ENCODE measurements at regions of chr17 and their contacts with region 1.

Region 1: DNA sequence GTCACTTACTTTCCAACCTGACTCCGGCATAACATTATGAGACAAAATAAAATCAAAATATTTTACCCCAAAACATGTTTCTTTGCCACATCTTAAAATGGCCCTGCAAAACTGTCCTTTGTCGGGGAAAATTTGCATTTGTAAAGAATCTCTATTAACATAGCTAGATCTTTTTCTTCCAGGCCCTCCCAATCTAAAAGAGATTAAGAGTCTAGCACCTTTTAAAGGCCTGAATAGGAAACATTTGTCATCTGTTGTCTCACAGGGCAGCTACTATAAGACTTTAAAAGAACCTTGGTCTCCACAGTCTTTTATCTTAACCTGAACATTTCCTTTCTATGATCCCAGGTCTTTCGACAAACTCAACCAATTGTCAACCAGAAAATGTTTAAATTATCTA is 18.1 kb upstream of the DHRS7B start:
- DNase-seq: no peak
- CTCF ChIP-seq: no peak

Region 2: GRCh38 chr17:21119247-21119918 is 10.7 kb after region 1 on chr17:
- CTCF ChIA-PET with region 1: interaction called, 56 read pairs
- POLR2A ChIA-PET with region 1: no interaction called
- DNase-seq: peak; percentile 78
- CTCF ChIP-seq: peak; percentile 94

Measured in GM10248 (cell line).